ENCODE measurements at regions of chr3 and their contacts with region 1.

Region 1: GRCh38 chr3:76308541-76308940 is 523.2 kb upstream of the ZNF717 start:
- DNase-seq: peak; percentile 85
- ATAC-seq: peak; percentile 43
- H3K4me3 ChIP-seq: no peak overlapping the region
- H3K27ac ChIP-seq: peak overlapping the region; percentile 79; the same call in 1 of the 2 replicates
- H3K4me1 ChIP-seq: peaks cover 9% of the 10 kb centered on the region
- H3K27me3 ChIP-seq: no peaks in the 10 kb centered on the region
- CTCF ChIP-seq: no peak
- POLR2A ChIP-seq: no peak
- RAD21 ChIP-seq: no peak

Region 2: DNA sequence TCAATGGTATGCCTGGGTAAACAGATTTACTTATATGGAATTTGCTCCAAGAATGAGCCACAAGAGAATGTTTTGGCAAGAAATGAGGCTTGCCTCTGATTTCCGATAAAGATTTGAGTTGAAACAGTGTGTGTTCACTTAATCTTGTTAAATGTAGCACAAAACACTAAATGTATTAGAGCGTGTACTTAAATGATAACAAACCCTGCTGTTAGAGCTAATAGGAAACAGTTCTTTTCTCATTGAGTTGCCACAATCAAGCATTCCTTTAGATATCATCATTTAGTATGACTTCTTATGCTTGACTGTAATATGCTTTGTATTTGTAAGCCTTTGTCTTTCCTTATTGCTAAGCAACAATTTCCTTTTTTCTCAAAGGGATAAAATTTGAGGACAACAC is 169.6 kb before region 1 on chr3:
- CTCF ChIA-PET with region 1: no interaction called
- POLR2A ChIA-PET with region 1: no interaction called
- dilution Hi-C with region 1: no loop called
- in situ Hi-C with region 1: no loop called
- intact Hi-C with region 1: no loop called
- DNase-seq: peak; percentile 2
- ATAC-seq: no peak
- H3K4me3 ChIP-seq: no peak overlapping the region
- H3K27ac ChIP-seq: no peak overlapping the region
- H3K4me1 ChIP-seq: no peaks in the 10 kb centered on the region
- H3K27me3 ChIP-seq: no peaks in the 10 kb centered on the region
- CTCF ChIP-seq: no peak
- POLR2A ChIP-seq: no peak
- RAD21 ChIP-seq: no peak

Region 3: GRCh38 chr3:76403556-76403955 is 95.0 kb after region 1 on chr3:
- CTCF ChIA-PET with region 1: no interaction called
- POLR2A ChIA-PET with region 1: no interaction called
- dilution Hi-C with region 1: no loop called
- in situ Hi-C with region 1: no loop called
- intact Hi-C with region 1: loop called (anchors 10 kb)
- DNase-seq: peak; percentile 90
- ATAC-seq: peak; percentile 82
- H3K4me3 ChIP-seq: no peak overlapping the region
- H3K27ac ChIP-seq: no peak overlapping the region
- H3K4me1 ChIP-seq: peaks cover 6% of the 10 kb centered on the region
- H3K27me3 ChIP-seq: no peaks in the 10 kb centered on the region
- CTCF ChIP-seq: no peak
- POLR2A ChIP-seq: no peak
- RAD21 ChIP-seq: no peak

Region 4: GRCh38 chr3:76585794-76586392 is 277.4 kb after region 1 on chr3:
- CTCF ChIA-PET with region 1: no interaction called
- POLR2A ChIA-PET with region 1: no interaction called
- dilution Hi-C with region 1: no loop called
- in situ Hi-C with region 1: no loop called
- intact Hi-C with region 1: loop called (anchors 5 kb)
- DNase-seq: peak; percentile 32
- ATAC-seq: peak; percentile 75
- H3K4me3 ChIP-seq: no peak overlapping the region
- H3K27ac ChIP-seq: no peak overlapping the region
- H3K4me1 ChIP-seq: no peaks in the 10 kb centered on the region
- H3K27me3 ChIP-seq: no peaks in the 10 kb centered on the region
- CTCF ChIP-seq: peak; percentile 63
- POLR2A ChIP-seq: no peak
- RAD21 ChIP-seq: peak; percentile 57

Measured in IMR-90 (cell line).